GM10248 (cell line): ENCODE measurements at regions of chr14 and their contacts with region 1.

Region 1: DNA sequence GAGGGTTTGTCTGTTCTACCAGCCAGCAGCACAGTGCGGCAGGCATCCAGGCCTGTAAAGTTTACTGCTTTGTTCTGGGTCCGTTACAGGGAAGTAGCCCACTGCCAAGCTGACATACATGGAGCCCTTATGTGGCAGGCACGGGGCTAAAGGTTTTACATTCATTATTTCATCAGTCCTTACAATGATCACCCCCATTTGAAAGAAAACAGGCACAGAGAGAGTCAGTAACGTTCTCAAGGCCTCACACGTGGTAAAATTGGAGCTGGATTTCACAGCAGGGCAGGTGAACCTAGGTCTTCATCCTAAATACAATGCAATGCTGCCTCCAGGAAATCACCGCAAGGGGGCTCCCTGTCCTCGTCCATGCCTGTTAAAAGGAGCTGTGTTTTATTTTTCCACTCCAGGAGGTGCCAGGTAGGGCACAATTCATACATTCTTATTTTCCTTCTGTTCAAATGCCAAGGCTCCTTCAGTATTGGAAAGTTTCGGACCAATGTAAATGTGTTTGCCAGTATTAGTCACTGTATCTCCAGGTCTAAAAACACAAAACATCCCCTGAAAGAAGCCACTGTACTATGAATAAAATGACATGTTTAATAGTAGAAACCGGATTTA is 172.2 kb upstream of the GZMB start:
- DNase-seq: peak; percentile 43
- CTCF ChIP-seq: peak; percentile 70

Region 2: GRCh38 chr14:24741871-24742270 is 64.3 kb before region 1 on chr14:
- CTCF ChIA-PET with region 1: no interaction called
- POLR2A ChIA-PET with region 1: no interaction called
- DNase-seq: no peak
- CTCF ChIP-seq: no peak

Region 3: GRCh38 chr14:24794644-24795305 is 11.4 kb before region 1 on chr14:
- CTCF ChIA-PET with region 1: interaction called, 30 read pairs
- POLR2A ChIA-PET with region 1: no interaction called
- DNase-seq: no peak
- CTCF ChIP-seq: no peak

Region 4: DNA sequence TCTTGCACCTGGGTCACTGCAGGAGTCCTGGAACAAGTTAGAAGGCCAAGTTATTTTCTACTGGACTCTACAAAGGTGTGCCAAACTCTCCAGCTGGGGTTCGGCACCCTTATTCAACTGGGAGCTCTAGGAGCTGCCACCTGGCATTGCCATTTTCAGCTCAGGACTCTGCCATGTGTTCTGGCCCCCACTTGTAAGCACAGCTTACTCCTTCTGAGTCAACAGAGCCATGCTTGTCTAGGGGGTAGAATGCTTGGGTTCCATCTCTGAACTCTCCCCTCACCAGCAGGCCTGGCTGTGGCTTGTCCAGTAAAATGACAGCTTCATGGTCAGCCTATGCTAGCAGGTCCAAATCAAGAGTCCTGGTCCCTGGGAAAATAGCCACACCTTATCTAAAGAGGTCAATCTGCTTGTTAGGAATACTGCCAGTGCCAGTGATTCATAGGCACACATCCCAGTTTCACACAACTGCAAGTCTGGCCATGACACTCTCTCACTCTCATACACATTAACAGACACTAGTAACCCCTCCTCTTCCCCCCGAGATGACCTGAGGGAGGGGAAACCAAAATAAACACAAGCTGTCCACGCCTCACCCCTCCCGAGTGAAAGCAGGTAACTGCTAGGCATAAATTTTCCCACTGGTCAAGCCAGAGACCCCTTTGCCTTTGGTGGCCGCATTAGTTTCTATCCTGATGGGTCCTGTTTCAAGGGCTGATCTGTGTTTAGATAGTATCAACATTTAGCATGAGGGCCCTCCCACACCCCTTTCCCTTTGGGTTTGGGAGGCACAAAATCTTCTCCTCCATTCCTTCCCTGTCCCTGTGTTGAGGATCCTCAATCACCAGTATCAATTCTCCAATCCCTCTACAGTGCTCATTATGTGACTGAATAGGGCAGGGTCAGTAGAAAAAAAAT is 10.1 kb after region 1 on chr14:
- CTCF ChIA-PET with region 1: interaction called, 22 read pairs
- POLR2A ChIA-PET with region 1: no interaction called
- DNase-seq: no peak
- CTCF ChIP-seq: no peak

Region 5: DNA sequence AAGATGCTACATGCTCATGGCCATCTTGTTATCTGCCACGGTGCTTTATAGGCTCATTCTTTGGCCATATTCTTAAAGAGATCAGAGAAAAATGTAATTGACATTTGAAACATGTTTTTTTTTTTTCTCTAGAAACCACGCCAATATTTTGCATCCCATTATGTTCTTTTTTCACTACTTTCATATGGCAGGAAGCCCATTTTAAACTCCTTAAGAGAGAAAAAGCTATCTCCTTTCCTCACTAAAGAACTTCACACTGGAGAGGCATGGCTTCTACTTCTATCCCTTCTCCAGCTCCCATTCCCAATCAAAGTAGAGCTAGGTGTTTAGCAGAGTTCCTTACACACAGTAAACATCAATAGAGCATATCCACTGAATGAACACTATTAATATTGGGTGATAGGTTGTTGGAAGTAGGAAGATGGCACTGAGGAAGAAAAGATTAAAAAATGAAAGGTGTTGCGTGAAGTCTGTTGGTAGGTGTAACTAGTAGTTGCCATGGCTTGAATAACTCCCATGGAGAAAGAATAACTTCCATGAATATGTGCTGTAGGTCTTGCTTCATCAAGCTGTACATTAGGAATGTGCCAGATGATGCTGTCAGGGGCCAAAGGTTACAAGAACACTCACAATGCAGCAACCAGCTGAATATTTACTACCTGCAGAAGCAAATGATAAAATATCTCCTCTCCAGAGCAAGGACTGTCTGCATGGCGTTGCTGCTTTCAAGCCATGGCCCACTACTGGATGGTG is 65.0 kb after region 1 on chr14:
- CTCF ChIA-PET with region 1: no interaction called
- POLR2A ChIA-PET with region 1: no interaction called
- DNase-seq: no peak
- CTCF ChIP-seq: no peak

Region 6: DNA sequence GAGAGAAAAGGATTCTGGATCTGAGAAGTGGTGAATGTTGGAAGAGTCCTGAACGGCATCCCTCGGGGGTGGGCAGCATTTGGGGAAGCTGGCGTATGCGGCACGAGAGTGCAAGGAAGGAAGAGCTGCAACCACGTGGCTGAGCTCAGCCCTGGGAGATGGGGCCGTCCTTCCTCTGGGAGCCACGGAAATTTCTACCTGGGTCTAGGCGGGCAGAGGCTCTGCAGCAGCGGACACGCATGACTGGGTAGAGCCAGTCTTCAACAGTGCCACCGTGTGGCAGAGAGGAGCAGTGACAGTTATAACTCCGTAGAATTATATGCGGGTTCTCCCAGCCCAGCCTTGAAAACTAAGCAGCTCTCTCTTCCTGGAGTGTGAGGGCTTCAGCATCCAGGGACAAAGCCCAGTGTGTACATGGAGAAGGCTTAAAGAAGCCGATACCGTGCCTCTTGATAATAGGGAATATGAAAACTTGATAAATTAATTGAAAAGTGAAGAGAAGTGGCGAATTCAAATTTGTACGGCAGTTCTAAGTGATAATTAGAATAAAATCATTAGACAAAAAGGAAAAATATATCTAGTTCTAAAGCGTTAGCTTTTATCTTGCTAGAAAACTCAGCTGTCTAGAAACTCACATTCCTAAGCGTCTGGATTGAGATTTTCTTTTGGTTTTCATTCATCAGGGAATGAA is 326.7 kb after region 1 on chr14:
- CTCF ChIA-PET with region 1: interaction called, 84 read pairs
- POLR2A ChIA-PET with region 1: no interaction called
- DNase-seq: peak; percentile 72
- CTCF ChIP-seq: peak; percentile 66

Region 7: DNA sequence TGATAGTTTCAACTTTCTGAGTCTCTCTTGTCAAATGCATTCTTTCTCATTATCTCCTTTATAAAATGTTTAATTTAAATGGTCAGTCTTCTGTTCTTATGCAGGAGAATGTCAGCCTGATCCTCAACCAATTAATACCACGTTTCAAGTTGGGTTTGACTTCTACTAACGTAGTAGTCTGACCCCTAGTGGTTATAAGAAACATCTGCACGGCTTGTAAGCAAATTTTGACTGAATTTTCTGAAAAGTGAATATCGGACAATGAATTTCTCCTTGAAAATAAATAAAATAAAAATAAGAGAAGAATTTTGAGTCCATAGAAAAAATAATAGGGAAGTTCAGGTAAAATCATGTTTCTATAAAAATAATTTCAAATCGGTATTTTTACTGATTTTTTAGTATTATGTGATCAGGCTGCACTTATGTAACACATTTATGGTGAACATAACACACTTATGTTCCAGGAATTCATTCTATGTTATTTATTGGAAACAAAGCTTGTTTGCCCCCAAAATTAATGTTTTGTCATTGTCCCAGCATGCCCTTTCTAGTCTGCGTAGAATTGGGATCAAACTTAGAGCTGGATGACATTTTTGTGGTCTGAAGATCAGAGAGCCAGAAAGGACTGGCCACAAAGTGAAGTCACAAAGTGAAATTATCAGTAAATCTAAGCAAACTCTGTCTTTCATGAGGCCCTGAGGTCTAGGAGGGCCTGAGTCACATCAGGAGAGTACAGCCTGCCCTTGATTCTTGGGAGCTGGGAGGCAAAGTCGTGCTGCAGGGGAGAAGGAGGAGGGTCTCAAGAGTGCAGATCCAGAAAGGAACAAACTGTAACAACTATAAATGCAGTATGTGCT is 345.0 kb after region 1 on chr14:
- CTCF ChIA-PET with region 1: interaction called, 13 read pairs
- POLR2A ChIA-PET with region 1: no interaction called
- DNase-seq: peak; percentile 52
- CTCF ChIP-seq: peak; percentile 75

Region 8: GRCh38 chr14:25197885-25198284 is 391.7 kb after region 1 on chr14:
- CTCF ChIA-PET with region 1: no interaction called
- POLR2A ChIA-PET with region 1: no interaction called
- DNase-seq: no peak
- CTCF ChIP-seq: no peak